ENCODE measurements at regions of chr4 and their contacts with region 1.

Region 1: GRCh38 chr4:153785910-153786721 is 2.8 kb downstream of the SFRP2 start:
- DNase-seq: peak in 1 of 9 donors; percentile 21
- ATAC-seq: no peak
- H3K4me3 ChIP-seq: no peak overlapping the region
- H3K4me3 Mint-ChIP-seq: no peak overlapping the region
- H3K27ac ChIP-seq: no peak overlapping the region
- H3K27ac Mint-ChIP-seq: no peak overlapping the region
- H3K4me1 ChIP-seq: peaks cover 0 to 20% of the 10 kb centered on the region in 2 donors
- H3K4me1 Mint-ChIP-seq: peaks cover 13 to 35% (median 24%) of the 10 kb centered on the region in 7 donors
- H3K27me3 ChIP-seq: peaks cover 7 to 15% of the 10 kb centered on the region in 2 donors
- H3K27me3 Mint-ChIP-seq: peaks cover 48 to 87% (median 61%) of the 10 kb centered on the region in 5 donors

Region 2: GRCh38 chr4:153809307-153809706 is 23.2 kb after region 1 on chr4:
- CTCF ChIA-PET with region 1: no interaction called
- POLR2A ChIA-PET with region 1: no interaction called
- intact Hi-C with region 1: loop called in 1 of 2 experiments (anchors 1 kb)
- DNase-seq: peak in 7 of 9 donors; percentile 50 to 84 (median 78)
- ATAC-seq: peak; percentile 93
- H3K4me3 ChIP-seq: no peak overlapping the region
- H3K4me3 Mint-ChIP-seq: peak overlapping the region in 8 of 10 donors; percentile 11 to 52 (median 30)
- H3K27ac ChIP-seq: no peak overlapping the region
- H3K27ac Mint-ChIP-seq: peak overlapping the region in 4 of 9 donors; percentile 3 to 65 (median 12)
- H3K4me1 ChIP-seq: peaks cover 14 to 18% of the 10 kb centered on the region in 2 donors
- H3K4me1 Mint-ChIP-seq: peaks cover 13 to 38% (median 31%) of the 10 kb centered on the region in 7 donors
- H3K27me3 ChIP-seq: no peaks in the 10 kb centered on the region
- H3K27me3 Mint-ChIP-seq: peaks cover 0 to 13% (median 0%) of the 10 kb centered on the region in 5 donors

Region 3: GRCh38 chr4:154024097-154024694 is 238.1 kb after region 1 on chr4:
- CTCF ChIA-PET with region 1: interaction called, 8 read pairs
- POLR2A ChIA-PET with region 1: no interaction called
- intact Hi-C with region 1: loop called (anchors 1 to 2 kb)
- DNase-seq: peak in 2 of 9 donors; percentile 1 to 5
- ATAC-seq: no peak
- H3K4me3 ChIP-seq: no peak overlapping the region
- H3K4me3 Mint-ChIP-seq: no peak overlapping the region
- H3K27ac ChIP-seq: no peak overlapping the region
- H3K27ac Mint-ChIP-seq: no peak overlapping the region
- H3K4me1 ChIP-seq: no peaks in the 10 kb centered on the region
- H3K4me1 Mint-ChIP-seq: no peaks in the 10 kb centered on the region
- H3K27me3 ChIP-seq: no peaks in the 10 kb centered on the region
- H3K27me3 Mint-ChIP-seq: peaks cover 2 to 35% (median 26%) of the 10 kb centered on the region in 5 donors

Region 4: DNA sequence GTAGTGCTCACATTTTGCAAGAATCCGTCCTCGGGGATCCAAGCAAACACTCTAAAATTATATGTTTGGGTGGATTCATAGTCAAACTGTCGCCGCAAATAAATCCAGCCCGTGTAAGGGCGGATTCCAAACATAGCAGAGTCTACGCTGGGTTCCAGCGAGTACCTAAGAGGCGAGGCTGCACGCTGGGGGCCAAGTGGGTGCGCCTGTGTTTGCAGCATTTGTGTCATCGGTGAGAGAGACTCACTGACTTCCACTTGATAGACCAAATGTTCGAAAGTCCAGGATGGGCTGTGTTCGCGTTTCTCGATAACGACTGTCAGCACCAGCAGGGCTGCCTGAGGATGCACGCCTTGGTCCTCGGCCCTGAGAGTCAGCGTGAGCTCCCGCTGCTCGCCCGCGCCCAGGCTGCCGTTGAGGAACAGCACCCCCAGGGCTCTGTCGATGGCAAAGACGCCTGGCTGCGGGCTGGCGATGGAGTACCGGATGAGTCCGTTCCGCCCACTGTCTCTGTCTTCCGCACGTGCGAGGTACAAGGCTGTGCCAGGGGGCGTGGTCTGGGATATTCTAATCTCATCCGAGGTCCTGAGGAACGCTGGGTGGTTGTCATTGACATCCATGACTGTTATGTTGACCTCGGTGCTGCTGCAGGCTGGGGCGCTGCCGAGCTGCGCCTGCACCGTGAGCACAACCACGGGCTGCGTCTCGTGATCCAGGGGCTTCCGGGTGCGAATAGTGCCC is 546.7 kb after region 1 on chr4:
- CTCF ChIA-PET with region 1: no interaction called
- POLR2A ChIA-PET with region 1: no interaction called
- intact Hi-C with region 1: loop called in 1 of 2 experiments (anchors 10 kb)
- DNase-seq: peak; percentile 25 to 68 (median 60)
- ATAC-seq: peak; percentile 85
- H3K4me3 ChIP-seq: peak overlapping the region; percentile 39
- H3K4me3 Mint-ChIP-seq: peak overlapping the region; percentile 80 to 92 (median 86)
- H3K27ac ChIP-seq: no peak overlapping the region
- H3K27ac Mint-ChIP-seq: peak overlapping the region in 7 of 9 donors; percentile 29 to 86 (median 83)
- H3K4me1 ChIP-seq: no peaks in the 10 kb centered on the region
- H3K4me1 Mint-ChIP-seq: peaks cover 4 to 13% (median 12%) of the 10 kb centered on the region in 7 donors
- H3K27me3 ChIP-seq: no peaks in the 10 kb centered on the region
- H3K27me3 Mint-ChIP-seq: peaks cover 14 to 53% (median 19%) of the 10 kb centered on the region in 5 donors

Region 5: DNA sequence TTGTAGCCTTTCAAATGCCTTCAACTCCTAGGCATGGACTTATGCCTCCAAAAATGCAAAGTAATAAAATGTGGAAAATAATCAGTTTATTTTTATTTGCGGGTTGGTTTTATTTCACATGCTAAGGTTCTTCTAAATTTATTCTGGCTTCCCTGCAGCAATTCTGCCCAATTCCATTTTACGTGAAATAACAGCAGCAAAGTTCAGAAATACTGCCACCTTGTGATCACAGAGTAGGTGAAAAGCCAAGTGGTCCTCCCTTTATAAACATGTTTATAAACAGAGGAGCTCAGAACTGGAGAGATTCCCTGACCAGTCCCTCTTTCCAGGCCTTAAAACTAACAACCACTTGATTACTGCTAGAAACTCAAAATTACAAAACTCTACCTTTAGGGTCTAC is 720.1 kb after region 1 on chr4:
- CTCF ChIA-PET with region 1: no interaction called
- POLR2A ChIA-PET with region 1: no interaction called
- intact Hi-C with region 1: loop called (anchors 5 kb)
- DNase-seq: peak in 2 of 9 donors; percentile 4 to 24
- ATAC-seq: no peak
- H3K4me3 ChIP-seq: no peak overlapping the region
- H3K4me3 Mint-ChIP-seq: no peak overlapping the region
- H3K27ac ChIP-seq: no peak overlapping the region
- H3K27ac Mint-ChIP-seq: no peak overlapping the region
- H3K4me1 ChIP-seq: no peaks in the 10 kb centered on the region
- H3K4me1 Mint-ChIP-seq: no peaks in the 10 kb centered on the region
- H3K27me3 ChIP-seq: peaks cover 0 to 4% of the 10 kb centered on the region in 2 donors
- H3K27me3 Mint-ChIP-seq: peaks cover 22 to 47% (median 30%) of the 10 kb centered on the region in 5 donors